ENCODE measurements at regions of chr9 and their contacts with region 1.

Region 1: GRCh38 chr9:126398403-126399058 is 71.9 kb downstream of the MVB12B start:
- DNase-seq: peak; percentile 94

Region 2: DNA sequence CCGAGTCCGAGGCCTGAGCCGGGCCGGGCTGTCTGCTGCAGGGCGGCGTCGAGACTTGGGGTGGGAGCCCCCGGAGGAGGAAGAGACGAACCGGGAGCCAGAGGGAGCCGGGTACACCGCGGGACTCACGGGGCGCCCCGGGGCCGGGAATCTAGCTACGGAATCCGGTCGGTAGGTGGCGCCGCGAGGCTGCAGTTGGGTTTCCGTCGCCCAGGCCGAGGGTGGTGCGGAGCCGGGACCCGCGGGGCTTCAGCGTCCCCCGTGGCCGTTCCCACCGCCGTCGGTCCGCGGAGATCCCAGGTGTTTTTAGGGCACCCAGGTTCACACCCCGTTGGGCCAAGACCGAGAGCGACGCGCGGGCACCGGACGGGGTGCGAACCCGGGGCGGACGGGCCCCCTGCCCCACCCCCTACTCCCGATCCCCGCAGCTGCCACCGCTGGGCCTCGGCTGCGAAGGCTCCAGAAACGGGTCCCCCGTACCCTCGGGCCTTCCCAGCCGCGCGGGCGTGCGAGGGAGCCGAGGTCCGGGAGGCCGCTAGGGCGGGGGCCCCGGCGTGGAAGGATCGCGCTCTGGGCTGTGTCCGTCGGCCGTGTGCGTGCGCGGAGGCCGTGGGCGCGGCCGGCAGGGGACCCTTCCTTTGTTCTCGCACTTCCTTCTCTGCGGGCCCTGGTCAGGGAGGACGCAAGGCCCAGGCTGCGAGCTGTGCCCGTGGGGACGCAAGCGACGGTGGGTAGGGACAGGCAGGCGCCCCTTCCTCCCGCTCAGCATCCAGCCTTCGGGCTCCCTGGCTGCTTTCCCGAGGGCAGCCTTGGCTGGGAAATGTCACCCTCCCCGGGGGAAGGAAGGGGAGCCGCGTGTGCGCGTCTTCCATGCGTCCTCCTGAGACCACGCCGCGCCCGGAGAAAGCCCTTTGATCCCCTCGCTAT is 990.3 kb before region 1 on chr9:
- intact Hi-C with region 1: loop called in 1 of 2 experiments (anchors 10 kb)
- DNase-seq: peak; percentile 94

Region 3: GRCh38 chr9:126219648-126220063 is 178.9 kb before region 1 on chr9:
- intact Hi-C with region 1: loop called in 1 of 2 experiments (anchors 1 kb)
- DNase-seq: peak; percentile 59

Region 4: GRCh38 chr9:126290871-126291270 is 107.7 kb before region 1 on chr9:
- intact Hi-C with region 1: no loop called
- DNase-seq: no peak

Region 5: DNA sequence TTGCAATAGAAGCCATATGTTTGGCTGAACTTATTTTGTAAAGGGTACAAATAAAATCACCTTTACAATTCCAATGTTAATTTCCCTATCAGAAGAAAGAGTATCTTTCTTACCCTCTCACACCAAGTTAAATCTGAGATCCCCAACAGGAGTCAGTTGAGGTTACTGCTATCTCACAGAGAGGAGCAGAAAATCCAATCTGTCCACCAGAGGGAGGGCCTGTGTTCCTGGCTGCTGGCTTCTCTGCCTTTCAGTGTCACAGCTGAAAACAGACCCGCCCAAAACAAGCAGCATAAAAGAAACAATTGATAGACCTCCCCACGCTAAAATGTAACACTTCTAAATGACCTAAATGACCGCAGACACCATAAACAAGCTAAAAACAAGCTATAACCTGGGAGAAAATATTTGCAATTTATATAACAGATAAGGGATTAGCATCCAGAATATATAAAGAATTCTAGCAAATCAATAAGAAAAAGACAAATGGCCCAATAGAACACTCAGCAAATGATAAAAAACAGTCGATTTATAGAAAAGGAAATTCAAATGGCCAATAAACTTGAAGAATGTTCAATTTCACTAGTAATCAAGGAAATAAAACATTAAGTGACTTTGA is 96.4 kb before region 1 on chr9:
- intact Hi-C with region 1: loop called in 1 of 2 experiments (anchors 10 kb)
- DNase-seq: no peak

Region 6: GRCh38 chr9:126326228-126327005 is 72.1 kb before region 1 on chr9 and contains the start of gene MVB12B:
- intact Hi-C with region 1: loop called in 1 of 2 experiments (anchors 10 kb)
- DNase-seq: peak; percentile 84
- total RNA-seq, gene MVB12B: 13.6 to 13.8 TPM